Activated CD4-positive, alpha-beta T cell treated with anti-CD3 and anti-CD28 coated beads, Interleukin-2, amount 10 ng/mL, durations not matched to agents 24 days and 14 days (primary cell): ENCODE measurements at regions of chr2 and their contacts with region 1.

Region 1: GRCh38 chr2:162058973-162059668 is 14.9 kb downstream of the DPP4 start:
- DNase-seq: peak; percentile 79
- H3K4me3 Mint-ChIP-seq: peak overlapping the region; percentile 79
- H3K27ac Mint-ChIP-seq: peak overlapping the region; percentile 95
- H3K4me1 Mint-ChIP-seq: peaks cover 81% of the 10 kb centered on the region
- H3K27me3 Mint-ChIP-seq: no peaks in the 10 kb centered on the region

Region 2: DNA sequence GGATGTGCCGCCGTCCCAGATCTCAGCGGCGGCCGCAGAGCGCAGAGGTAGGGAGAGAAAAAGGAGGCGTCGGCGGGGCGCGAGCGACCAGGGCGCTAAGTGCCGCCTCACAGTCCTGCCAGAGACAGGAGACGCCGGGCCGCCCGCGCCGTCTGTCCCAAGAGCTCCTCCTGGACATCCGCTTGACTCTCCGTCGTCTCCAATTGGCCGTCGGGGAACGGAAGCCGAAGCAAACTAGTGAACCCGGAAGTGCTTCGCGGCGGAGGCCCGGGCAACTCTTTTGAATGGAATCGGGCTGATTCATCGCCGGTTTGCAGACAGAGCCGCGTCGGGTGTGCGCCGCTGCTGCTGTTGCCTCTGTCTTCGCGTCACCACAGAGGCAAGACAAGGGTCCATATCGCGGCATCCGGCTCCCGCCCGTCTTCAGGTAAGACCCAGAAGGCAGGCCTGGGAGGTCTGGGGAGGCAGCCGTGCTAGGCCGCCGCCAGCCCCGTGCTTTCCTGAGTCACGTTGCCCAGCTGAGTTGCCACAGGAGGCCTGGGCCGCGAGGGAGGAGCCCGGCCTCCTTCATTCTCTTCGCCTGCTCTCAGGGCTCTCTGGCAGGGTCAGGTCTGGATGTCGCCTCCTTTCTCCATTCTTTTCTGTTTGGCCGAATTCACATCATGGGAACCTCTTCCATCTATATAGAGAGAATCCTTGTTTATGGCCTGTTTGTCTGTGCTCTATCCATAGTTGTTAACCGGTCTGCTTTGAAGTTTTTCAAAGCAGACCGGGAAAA is 750.8 kb before region 1 on chr2 and contains the start of gene PSMD14:
- intact Hi-C with region 1: loop called (anchors 2 kb)
- DNase-seq: peak; percentile 97
- H3K4me3 Mint-ChIP-seq: peak within 1 kb of the TSS; percentile 99
- H3K27ac Mint-ChIP-seq: peak within 1 kb of the TSS; percentile 97
- H3K4me1 Mint-ChIP-seq: peaks cover 33% of the 10 kb centered on the region
- H3K27me3 Mint-ChIP-seq: peaks cover 11% of the 10 kb centered on the region
- total RNA-seq, gene PSMD14: 111 and 113 TPM in 2 replicates

Region 3: GRCh38 chr2:161965994-161966393 is 93.1 kb before region 1 on chr2:
- intact Hi-C with region 1: loop called (anchors 1 kb)
- DNase-seq: no peak
- H3K4me3 Mint-ChIP-seq: no peak overlapping the region
- H3K27ac Mint-ChIP-seq: no peak overlapping the region
- H3K4me1 Mint-ChIP-seq: peaks cover 39% of the 10 kb centered on the region
- H3K27me3 Mint-ChIP-seq: no peaks in the 10 kb centered on the region

Region 4: DNA sequence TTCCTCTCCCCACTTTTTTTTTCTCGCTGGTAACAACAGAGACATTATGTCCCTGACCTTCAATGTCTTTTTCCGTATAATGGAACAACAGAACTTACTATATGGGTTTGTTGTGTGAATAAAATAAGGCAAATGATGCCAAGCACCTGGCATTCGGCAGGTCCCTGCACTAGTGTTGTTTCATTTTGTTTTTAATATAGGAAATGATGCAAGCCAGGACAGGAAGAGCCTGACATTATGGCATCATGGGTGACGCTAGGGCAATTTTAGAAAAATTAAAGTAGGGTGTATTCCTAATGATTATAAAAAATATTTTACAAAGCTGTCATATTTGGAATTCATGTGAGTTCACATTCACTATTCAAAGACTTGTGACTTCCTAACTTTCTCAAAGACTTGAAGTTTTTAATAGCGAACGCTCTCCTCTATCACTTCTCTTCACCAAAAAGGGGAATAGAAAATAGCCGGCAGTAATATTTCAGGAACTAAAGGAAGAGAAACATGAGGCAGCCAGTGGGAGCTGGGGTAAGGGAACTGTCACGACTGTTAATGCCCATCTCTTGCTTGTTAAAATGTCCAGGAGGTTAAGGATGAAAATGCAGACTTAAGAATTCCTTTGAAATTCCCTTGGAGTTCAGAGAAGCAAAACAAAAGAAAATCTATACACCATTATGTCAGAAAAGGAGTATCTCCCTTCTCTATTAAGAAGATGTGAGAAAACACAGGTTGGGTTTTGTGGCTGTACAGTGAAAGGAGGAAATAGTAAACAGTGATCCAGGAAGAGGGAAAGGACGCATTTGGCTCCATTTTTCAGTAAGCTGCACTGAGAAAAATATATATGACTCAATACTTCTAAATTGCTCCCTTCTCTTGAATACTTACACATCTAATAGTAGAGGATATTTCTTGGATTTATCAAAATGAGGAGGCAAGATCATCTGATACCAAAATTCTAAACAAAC is 45.3 kb before region 1 on chr2:
- intact Hi-C with region 1: loop called (anchors 1 kb)
- DNase-seq: peak; percentile 66
- H3K4me3 Mint-ChIP-seq: peak overlapping the region; percentile 78
- H3K27ac Mint-ChIP-seq: peak overlapping the region; percentile 95
- H3K4me1 Mint-ChIP-seq: peaks cover 73% of the 10 kb centered on the region
- H3K27me3 Mint-ChIP-seq: no peaks in the 10 kb centered on the region

Region 5: DNA sequence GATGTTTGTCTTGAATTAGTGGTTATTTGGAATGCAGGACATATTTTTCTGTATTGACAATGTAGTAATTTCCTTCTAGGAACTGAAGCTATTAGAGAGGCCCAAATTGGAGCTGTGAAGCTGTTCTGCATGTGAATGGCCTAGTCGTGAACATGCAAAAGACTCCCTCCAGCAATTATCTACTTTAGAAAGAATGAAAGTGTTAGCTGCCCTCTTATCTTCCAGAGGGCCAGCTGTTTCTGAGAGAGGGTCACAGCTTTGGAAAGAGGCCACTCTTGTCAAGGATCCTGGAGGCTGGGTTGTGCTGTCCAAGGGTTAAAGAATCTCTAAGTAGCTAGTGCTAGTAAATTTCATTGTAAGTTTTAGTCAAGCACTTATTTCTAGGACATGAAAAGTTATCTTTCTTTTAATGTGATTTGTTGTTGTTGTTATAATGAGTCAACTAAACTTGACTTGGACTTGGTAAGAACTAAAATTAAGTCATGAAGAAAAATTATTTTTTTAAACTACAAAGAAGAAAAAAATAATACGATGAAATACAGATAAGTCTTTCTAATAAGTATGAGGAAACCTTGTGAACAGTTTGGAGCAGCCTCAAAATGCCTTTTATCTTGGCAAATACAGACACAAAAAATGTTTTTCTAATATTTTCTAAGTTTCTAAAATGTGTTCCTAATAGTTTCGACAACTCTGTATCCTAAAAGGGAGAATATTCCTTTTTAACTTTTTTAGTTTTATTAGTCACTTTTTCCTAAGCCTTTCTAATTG is 21.9 kb before region 1 on chr2:
- intact Hi-C with region 1: no loop called
- DNase-seq: no peak
- H3K4me3 Mint-ChIP-seq: no peak overlapping the region
- H3K27ac Mint-ChIP-seq: no peak overlapping the region
- H3K4me1 Mint-ChIP-seq: peaks cover 34% of the 10 kb centered on the region
- H3K27me3 Mint-ChIP-seq: no peaks in the 10 kb centered on the region

Region 6: DNA sequence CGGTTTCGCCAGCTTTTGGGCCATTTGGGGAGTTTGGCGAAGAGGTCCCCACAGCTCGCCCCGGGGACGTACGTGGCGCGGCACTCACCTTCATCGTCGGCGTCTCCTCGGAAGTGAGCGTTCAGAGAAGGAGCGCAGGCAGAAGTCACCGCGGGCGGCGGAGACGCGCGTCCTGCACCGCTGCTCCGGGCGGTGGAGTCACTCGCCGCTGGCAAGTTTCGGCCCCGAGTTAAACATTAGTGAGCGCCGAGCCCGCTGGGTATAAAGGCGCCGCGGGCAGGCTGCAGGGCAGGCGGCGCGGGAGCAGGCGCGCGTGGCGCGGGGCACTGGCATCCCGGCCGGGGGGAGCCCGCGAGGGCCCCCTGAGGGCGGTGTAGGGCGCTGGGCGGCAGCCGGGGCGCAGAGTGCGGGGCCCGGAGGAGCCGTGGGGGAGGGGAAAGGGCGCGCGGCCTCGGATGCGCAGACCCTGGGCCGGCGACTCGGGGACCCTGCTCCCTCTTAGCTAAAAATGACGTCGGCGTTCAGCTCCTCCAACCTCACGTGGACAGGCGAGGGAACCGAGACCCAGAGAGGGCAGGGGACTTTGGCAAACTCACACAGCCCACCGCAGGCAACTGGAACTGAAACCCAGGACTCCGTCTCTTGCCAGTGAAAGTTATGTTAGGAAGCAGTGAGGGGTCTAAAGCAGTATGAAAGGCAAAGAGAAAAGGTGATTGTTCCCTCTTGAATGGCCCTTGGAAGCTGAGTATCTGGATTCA is 14.9 kb after region 1 on chr2 and contains the start of gene DPP4:
- intact Hi-C with region 1: loop called (anchors 1 kb)
- DNase-seq: peak; percentile 89
- H3K4me3 Mint-ChIP-seq: peak within 1 kb of the TSS; percentile 95
- H3K27ac Mint-ChIP-seq: peak within 1 kb of the TSS; percentile 96
- H3K4me1 Mint-ChIP-seq: peaks cover 46% of the 10 kb centered on the region
- H3K27me3 Mint-ChIP-seq: no peaks in the 10 kb centered on the region
- total RNA-seq, gene DPP4: 65.4 and 68.0 TPM in 2 replicates

Region 7: DNA sequence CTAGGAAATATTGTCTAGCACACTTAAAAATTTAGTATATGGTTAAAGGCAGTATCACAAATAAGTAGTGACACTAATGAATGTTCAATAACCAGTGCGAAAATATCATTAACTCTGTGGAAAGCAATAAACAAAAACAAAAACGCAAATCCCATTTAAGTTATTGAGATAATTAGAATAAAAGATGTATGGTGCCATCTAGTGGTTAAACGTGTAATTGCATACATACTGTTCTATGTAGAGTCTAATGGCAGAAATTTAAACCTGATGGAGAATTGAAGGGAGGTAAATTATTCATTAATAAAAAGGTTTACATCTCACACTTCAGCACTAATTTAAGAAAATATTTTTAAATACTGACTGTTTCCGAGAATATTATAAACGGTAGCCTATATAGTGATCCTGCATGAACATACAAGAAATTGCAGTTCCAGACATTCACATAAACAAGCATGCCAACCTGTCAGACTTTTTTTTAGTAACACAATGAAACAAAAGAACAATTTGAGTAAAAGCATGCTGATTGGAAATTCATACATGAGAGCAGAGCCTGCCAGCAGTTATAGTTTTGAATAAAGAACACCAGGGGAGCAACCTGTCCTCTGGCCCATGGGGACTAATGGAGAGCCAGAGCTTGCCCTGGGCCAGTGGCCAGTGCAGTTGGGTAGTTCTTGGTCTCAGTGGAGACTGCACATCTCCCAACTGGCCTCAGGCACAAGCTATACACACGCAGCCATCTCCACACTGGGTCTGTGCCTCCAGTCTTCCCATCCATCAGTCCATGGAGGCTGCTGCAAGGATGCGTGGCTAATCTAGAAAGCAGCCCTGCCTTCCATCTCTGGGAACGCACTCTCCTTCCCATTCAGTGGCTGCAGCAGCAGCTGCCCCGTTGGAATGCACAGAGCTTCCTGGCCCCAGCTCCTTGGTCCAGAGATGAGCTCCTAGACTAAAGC is 65.0 kb after region 1 on chr2:
- intact Hi-C with region 1: loop called (anchors 5 kb)
- DNase-seq: peak; percentile 73
- H3K4me3 Mint-ChIP-seq: no peak overlapping the region
- H3K27ac Mint-ChIP-seq: no peak overlapping the region
- H3K4me1 Mint-ChIP-seq: peaks cover 16% of the 10 kb centered on the region
- H3K27me3 Mint-ChIP-seq: peaks cover 7% of the 10 kb centered on the region

Region 8: DNA sequence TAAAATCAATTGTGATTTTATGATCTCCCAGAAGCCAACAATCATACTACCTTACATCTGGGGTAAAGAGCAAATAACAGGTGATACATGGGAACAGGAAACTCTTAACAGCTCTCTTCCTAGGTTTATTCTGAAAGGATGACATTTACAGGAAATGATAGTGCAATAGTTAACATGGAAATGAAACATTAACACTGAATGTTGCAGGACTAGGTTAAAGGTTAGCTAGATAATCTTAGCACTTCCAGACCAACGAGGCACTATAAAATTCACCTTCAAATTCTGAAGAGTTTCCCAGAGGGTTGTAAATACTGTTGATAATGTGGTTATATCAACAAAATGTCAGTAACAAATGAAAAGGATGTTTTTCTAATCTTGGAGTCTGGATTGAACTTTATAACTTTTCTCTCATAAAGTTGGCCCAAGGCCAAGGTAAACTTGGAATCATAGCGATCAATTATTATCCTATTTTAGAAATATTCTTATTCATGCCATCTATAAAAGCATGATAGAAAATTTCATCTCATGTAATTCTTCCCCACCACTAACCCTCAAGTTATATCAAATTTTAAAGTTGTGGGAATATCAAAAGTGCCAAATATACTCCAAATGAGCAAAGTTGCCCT is 125.8 kb after region 1 on chr2:
- intact Hi-C with region 1: no loop called
- DNase-seq: no peak
- H3K4me3 Mint-ChIP-seq: no peak overlapping the region
- H3K27ac Mint-ChIP-seq: no peak overlapping the region
- H3K4me1 Mint-ChIP-seq: peaks cover 4% of the 10 kb centered on the region
- H3K27me3 Mint-ChIP-seq: peaks cover 5% of the 10 kb centered on the region

Region 9: GRCh38 chr2:162252153-162252552 is 193.0 kb after region 1 on chr2:
- intact Hi-C with region 1: no loop called
- DNase-seq: no peak
- H3K4me3 Mint-ChIP-seq: no peak overlapping the region
- H3K27ac Mint-ChIP-seq: no peak overlapping the region
- H3K4me1 Mint-ChIP-seq: no peaks in the 10 kb centered on the region
- H3K27me3 Mint-ChIP-seq: peaks cover 30% of the 10 kb centered on the region

Region 10: GRCh38 chr2:162449471-162449870 is 390.4 kb after region 1 on chr2:
- intact Hi-C with region 1: no loop called
- DNase-seq: no peak
- H3K4me3 Mint-ChIP-seq: no peak overlapping the region
- H3K27ac Mint-ChIP-seq: no peak overlapping the region
- H3K4me1 Mint-ChIP-seq: no peaks in the 10 kb centered on the region
- H3K27me3 Mint-ChIP-seq: peaks cover 7% of the 10 kb centered on the region